ENCODE measurements at regions of chr5 and their contacts with region 1.

Region 1: DNA sequence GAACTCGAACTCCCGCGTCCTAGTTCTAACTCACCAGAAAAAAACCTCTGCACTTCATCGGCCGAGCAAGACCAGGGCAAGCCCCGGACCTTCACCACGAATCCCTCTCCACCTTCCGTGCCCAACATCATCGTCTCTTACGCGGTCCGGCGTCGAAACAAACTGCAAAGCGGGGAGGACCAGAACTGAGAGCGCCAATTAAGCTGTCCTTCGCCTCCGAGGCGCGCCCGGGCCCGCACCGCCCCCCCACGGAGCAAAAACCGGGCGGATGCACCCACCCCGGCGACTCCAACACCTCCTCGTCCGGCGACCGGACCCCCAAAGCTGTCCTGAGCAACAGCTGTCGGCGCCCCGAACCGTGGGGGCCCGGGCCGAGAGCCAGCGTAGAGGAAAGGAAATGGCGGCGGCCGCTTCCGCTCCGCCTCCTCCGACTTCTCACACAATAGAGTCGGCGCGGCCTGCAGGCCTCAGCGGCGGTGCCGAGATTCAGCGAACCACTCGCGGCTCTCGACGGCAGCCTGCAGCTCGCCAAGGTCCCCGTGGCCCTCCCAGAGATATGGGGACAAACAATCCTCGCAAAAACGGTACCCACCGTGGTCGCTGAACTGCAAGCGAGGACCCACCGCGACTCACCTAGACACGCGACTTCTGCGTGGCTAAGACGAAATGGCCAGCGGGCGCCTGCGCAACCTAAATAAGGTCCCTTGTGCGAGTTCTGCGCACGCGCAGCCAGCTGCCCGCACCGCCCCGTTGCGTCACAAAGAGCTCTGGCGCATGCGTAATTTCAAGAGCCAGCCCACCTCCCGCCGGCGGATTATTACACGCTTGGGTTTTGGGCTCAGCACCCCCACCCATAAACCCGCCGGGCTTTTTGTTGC is at the start of gene HNRNPH1:
- DNase-seq: peak; percentile 100
- H3K4me3 ChIP-seq: peak within 1 kb of the TSS; percentile 85 to 95 (median 94)
- H3K27ac ChIP-seq: peak within 1 kb of the TSS; percentile 97
- H3K4me1 ChIP-seq: peaks cover 39% of the 10 kb centered on the region
- H3K27me3 ChIP-seq: no peaks in the 10 kb centered on the region
- CTCF ChIP-seq: no peak
- POLR2A ChIP-seq: peak; percentile 100
- total RNA-seq, gene HNRNPH1: 969 and 993 TPM in 2 replicates

Region 2: DNA sequence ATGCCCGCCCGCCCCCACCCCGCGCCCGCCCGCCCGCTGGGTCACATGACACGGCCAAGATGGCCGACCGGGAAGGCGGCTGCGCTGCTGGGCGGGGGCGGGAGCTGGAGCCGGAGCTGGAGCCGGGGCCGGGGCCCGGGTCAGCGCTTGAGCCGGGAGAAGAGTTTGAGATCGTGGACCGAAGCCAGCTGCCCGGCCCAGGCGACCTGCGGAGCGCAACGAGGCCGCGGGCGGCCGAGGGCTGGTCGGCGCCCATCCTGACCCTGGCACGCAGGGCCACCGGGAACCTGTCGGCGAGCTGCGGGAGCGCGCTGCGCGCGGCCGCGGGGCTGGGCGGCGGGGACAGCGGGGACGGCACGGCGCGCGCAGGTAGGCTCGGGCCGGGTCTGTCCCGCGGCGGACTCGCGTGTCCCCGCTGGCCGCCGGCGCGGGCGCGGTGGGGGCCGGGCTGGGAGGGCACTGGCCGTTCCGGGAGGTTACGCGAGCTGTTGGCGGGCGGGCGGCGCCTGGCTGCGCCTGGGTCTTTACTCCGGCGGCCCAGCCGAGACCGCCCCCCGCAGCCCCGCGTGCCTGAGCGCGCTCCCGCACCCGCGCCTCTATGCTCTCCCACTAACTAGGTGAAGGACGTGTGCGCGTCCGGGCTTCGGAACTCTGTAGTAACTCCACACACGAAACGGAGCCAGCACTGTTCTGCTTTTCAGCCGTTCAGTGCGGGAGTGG is 72.6 kb before region 1 on chr5 and contains the start of gene RUFY1:
- CTCF ChIA-PET with region 1: no interaction called
- POLR2A ChIA-PET with region 1: interaction called, 7 read pairs
- dilution Hi-C with region 1: no loop called
- intact Hi-C with region 1: loop called (anchors 5 kb)
- DNase-seq: peak; percentile 85
- H3K4me3 ChIP-seq: peak within 1 kb of the TSS; percentile 71 to 89 (median 79)
- H3K27ac ChIP-seq: peak within 1 kb of the TSS; percentile 80
- H3K4me1 ChIP-seq: peaks cover 19% of the 10 kb centered on the region
- H3K27me3 ChIP-seq: no peaks in the 10 kb centered on the region
- CTCF ChIP-seq: no peak
- POLR2A ChIP-seq: peak; percentile 69
- total RNA-seq, gene RUFY1: 43.3 and 44.9 TPM in 2 replicates

Region 3: GRCh38 chr5:179678223-179679013 is 55.2 kb after region 1 on chr5:
- CTCF ChIA-PET with region 1: no interaction called
- POLR2A ChIA-PET with region 1: interaction called, 11 read pairs
- dilution Hi-C with region 1: no loop called
- intact Hi-C with region 1: loop called (anchors 1 kb)
- DNase-seq: peak; percentile 96
- H3K4me3 ChIP-seq: peak overlapping the region; percentile 62 to 64 (median 63)
- H3K27ac ChIP-seq: peak overlapping the region; percentile 35
- H3K4me1 ChIP-seq: no peaks in the 10 kb centered on the region
- H3K27me3 ChIP-seq: no peaks in the 10 kb centered on the region
- CTCF ChIP-seq: no peak
- POLR2A ChIP-seq: peak; percentile 98

Region 4: DNA sequence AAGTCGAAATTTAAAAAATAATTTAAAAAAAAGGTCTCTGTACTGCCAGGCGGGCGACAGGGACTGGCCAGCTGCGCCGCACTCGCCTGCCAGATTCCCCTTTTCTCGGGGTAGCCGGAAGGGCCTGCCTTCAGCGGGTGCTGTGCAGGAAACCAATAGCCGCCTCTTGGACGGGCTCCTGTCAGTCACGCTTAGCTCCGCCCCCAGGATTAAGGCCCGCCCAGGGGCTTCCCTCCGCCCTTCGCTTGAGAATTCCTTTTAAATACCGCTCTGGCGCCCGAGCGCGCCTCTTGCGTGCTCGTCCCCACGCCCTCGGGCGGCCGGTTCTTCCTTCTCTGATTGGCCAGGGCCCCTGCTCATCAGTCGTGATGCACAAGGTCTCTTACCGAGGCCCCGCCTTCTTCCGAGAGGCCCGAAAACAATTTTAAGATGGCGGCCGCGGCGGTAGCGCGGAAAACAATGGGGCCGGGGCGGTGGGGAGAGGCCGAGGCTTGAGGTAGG is 109.2 kb after region 1 on chr5 and contains the start of gene MAML1:
- CTCF ChIA-PET with region 1: no interaction called
- POLR2A ChIA-PET with region 1: interaction called, 7 read pairs
- dilution Hi-C with region 1: no loop called
- intact Hi-C with region 1: loop called (anchors 5 kb)
- DNase-seq: peak; percentile 100
- H3K4me3 ChIP-seq: peak within 1 kb of the TSS; percentile 64 to 92 (median 77)
- H3K27ac ChIP-seq: peak within 1 kb of the TSS; percentile 70
- H3K4me1 ChIP-seq: peaks cover 28% of the 10 kb centered on the region
- H3K27me3 ChIP-seq: no peaks in the 10 kb centered on the region
- CTCF ChIP-seq: no peak
- POLR2A ChIP-seq: peak; percentile 83
- total RNA-seq, gene MAML1: 29.0 and 30.1 TPM in 2 replicates

Measured in endothelial cell of umbilical vein (primary cell).